ENCODE measurements at regions of chr19 and their contacts with region 1.

Region 1: GRCh38 chr19:51367565-51368365 is 1.0 kb downstream of the CLDND2 start:
- DNase-seq: peak; percentile 87 to 98 (median 94)
- ATAC-seq: peak; percentile 78
- H3K4me3 ChIP-seq: peak overlapping the region; percentile 90
- H3K4me3 Mint-ChIP-seq: peak overlapping the region; percentile 96
- H3K27ac ChIP-seq: peak overlapping the region; percentile 65 to 73
- H3K27ac Mint-ChIP-seq: peak overlapping the region; percentile 84
- H3K4me1 ChIP-seq: peaks cover 80% of the 10 kb centered on the region
- H3K4me1 Mint-ChIP-seq: peaks cover 74% of the 10 kb centered on the region
- H3K27me3 ChIP-seq: no peaks in the 10 kb centered on the region
- H3K27me3 Mint-ChIP-seq: no peaks in the 10 kb centered on the region
- CTCF ChIP-seq: no peak

Region 2: DNA sequence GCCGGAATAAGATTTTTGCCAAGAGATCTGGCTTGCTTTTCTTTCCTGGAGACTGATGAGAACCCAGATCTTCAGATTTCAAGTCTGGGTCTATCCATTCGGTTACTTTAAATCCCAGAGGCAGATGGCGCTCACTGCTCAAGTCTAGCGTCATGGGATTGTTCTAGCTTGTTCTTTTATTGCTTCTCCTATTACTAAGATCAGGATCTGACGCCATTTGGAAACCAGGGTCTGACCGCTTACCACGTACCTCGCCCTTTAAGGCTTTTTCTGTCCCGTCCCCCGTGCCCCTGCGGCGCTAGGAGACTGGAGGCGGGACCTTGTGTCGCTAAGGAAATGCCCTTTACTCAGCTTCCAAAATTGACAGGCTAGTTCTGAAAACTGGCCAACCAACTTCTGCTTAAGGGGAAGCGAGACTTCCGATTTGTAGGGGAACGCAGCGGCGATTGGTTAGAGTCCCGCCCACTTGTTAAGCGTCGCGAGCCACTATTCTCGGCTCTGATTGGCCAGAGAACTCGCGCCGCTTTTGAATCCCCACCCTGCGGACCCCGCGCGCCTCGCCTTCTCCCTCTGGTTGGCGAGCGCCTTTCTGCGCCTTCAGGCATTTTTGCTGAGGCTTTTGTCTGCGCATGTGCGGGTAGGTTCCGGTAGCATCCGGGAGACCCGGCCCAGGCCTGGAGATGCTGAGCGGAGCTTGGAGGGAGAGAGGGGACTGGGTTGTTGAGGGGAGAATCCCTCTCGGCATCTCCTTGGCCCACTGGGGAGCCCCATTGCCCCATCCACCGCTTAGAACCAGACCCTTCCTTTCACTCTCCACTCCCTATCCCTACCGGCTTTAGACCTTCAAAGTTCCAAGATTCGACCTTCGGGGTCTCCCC is 26.4 kb after region 1 on chr19:
- CTCF ChIA-PET with region 1: interaction called, 3 read pairs
- POLR2A ChIA-PET with region 1: interaction called, 9 read pairs
- intact Hi-C with region 1: loop called in 1 of 2 experiments (anchors 1 kb)
- DNase-seq: peak; percentile 69 to 96 (median 76)
- ATAC-seq: peak; percentile 95
- H3K4me3 ChIP-seq: peak overlapping the region; percentile 52
- H3K4me3 Mint-ChIP-seq: peak overlapping the region; percentile 90
- H3K27ac ChIP-seq: peak overlapping the region; percentile 21 to 31
- H3K27ac Mint-ChIP-seq: peak overlapping the region; percentile 58
- H3K4me1 ChIP-seq: peaks cover 26% of the 10 kb centered on the region
- H3K4me1 Mint-ChIP-seq: peaks cover 23% of the 10 kb centered on the region
- H3K27me3 ChIP-seq: no peaks in the 10 kb centered on the region
- H3K27me3 Mint-ChIP-seq: no peaks in the 10 kb centered on the region
- CTCF ChIP-seq: no peak